CD4-positive, alpha-beta memory T cell (primary cell): ENCODE measurements at regions of chr20 and their contacts with region 1.

Region 1: DNA sequence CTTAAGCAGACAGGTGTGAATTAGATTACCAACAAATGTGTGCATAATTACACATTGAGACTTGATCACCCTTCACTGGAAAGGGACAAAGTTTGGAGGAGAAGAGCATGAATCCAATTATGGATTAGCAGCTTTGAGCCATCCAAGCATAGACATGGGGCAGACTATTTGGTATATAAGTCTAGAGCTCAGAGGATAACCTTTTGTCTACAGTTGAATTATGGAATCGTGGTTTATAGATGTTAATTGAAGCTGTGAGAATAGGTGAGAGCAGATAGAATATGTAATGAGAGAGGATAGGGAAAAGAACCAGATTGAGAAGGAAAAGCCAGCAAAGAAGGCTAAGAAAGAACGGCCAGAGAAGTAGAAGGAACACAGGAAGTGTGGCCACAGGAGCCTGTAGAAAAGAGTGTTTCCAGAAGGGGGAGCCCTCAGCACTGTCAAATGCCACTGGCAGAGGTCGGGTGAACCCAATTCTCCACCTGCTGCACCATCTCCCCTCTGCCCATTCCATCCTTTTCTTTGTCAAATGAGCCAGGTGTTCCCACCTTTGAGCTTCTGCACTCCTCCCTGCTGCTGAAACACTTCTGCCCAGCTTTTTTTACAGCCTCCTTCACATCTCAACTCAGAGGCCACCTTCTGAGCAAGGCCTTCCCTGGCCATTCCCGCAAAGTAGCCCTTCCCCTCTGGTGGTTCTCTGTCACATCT is 7.3 kb downstream of the DNTTIP1 start:
- DNase-seq: peak; percentile 56 to 62 (median 60)
- H3K4me3 ChIP-seq: no peak overlapping the region
- H3K4me3 Mint-ChIP-seq: no peak overlapping the region
- H3K27ac ChIP-seq: no peak overlapping the region
- H3K27ac Mint-ChIP-seq: peak overlapping the region in 6 of 7 donors; percentile 3 to 89 (median 46)
- H3K4me1 ChIP-seq: peaks cover 7% of the 10 kb centered on the region
- H3K4me1 Mint-ChIP-seq: peaks cover 4 to 11% (median 8%) of the 10 kb centered on the region in 4 donors
- H3K27me3 ChIP-seq: no peaks in the 10 kb centered on the region
- H3K27me3 Mint-ChIP-seq: no peaks in the 10 kb centered on the region

Region 2: DNA sequence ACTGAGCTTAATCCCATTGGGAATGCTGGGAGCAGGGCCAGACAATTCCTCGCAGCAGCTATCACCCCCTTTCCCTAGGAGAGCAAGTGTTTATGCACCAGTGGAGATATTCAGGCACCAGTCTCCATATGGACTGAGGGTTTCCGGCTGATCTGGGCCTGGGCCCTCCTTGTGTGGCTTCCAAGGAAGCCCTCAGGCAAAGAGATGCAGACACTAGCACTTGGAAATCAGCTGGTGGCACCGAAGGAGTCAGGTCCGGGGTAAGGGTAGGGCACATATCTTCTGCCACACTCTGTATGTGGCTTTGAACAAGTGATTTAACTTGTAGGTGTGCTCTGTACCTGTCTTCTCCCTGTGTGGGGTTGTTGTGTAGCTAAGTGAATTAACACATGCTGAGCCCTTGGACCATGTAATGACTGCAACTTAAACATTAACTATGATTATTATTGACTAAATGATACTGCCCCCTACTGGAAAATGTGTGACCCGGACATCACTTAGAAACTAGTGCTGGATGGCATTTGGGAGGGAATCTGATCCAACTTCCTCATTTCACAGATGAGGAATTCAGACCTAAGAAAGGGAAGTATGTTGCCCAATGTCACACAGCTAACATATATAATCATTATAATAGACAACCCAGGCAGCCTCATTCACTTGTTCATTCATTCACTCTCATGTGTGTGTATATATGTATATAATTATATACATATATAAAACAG is 348.8 kb before region 1 on chr20:
- CTCF ChIA-PET with region 1: no interaction called
- POLR2A ChIA-PET with region 1: no interaction called
- intact Hi-C with region 1: no loop called
- DNase-seq: peak in 4 of 5 donors; percentile 36 to 47 (median 46)
- H3K4me3 ChIP-seq: no peak overlapping the region
- H3K4me3 Mint-ChIP-seq: no peak overlapping the region
- H3K27ac ChIP-seq: no peak overlapping the region
- H3K27ac Mint-ChIP-seq: no peak overlapping the region
- H3K4me1 ChIP-seq: no peaks in the 10 kb centered on the region
- H3K4me1 Mint-ChIP-seq: peaks cover 6 to 11% (median 8%) of the 10 kb centered on the region in 4 donors
- H3K27me3 ChIP-seq: no peaks in the 10 kb centered on the region
- H3K27me3 Mint-ChIP-seq: peaks cover 4 to 8% of the 10 kb centered on the region in 2 donors

Region 3: GRCh38 chr20:45523821-45524220 is 275.3 kb before region 1 on chr20:
- CTCF ChIA-PET with region 1: no interaction called
- POLR2A ChIA-PET with region 1: no interaction called
- intact Hi-C with region 1: no loop called
- DNase-seq: no peak
- H3K4me3 ChIP-seq: no peak overlapping the region
- H3K4me3 Mint-ChIP-seq: no peak overlapping the region
- H3K27ac ChIP-seq: no peak overlapping the region
- H3K27ac Mint-ChIP-seq: no peak overlapping the region
- H3K4me1 ChIP-seq: no peaks in the 10 kb centered on the region
- H3K4me1 Mint-ChIP-seq: no peaks in the 10 kb centered on the region
- H3K27me3 ChIP-seq: peaks cover 4% of the 10 kb centered on the region
- H3K27me3 Mint-ChIP-seq: peaks cover 32 to 36% of the 10 kb centered on the region in 2 donors

Region 4: GRCh38 chr20:45823949-45824835 is 25.1 kb after region 1 on chr20:
- CTCF ChIA-PET with region 1: interaction called, 11 read pairs
- POLR2A ChIA-PET with region 1: no interaction called
- intact Hi-C with region 1: no loop called
- DNase-seq: peak; percentile 37 to 58 (median 47)
- H3K4me3 ChIP-seq: peak overlapping the region in 1 of 2 donors; percentile 46
- H3K4me3 Mint-ChIP-seq: peak overlapping the region; percentile 64 to 84 (median 80)
- H3K27ac ChIP-seq: no peak overlapping the region
- H3K27ac Mint-ChIP-seq: peak overlapping the region in 6 of 7 donors; percentile 2 to 86 (median 66)
- H3K4me1 ChIP-seq: peaks cover 7% of the 10 kb centered on the region
- H3K4me1 Mint-ChIP-seq: peaks cover 7 to 22% (median 15%) of the 10 kb centered on the region in 4 donors
- H3K27me3 ChIP-seq: no peaks in the 10 kb centered on the region
- H3K27me3 Mint-ChIP-seq: peaks cover 6 to 19% of the 10 kb centered on the region in 2 donors

Region 5: DNA sequence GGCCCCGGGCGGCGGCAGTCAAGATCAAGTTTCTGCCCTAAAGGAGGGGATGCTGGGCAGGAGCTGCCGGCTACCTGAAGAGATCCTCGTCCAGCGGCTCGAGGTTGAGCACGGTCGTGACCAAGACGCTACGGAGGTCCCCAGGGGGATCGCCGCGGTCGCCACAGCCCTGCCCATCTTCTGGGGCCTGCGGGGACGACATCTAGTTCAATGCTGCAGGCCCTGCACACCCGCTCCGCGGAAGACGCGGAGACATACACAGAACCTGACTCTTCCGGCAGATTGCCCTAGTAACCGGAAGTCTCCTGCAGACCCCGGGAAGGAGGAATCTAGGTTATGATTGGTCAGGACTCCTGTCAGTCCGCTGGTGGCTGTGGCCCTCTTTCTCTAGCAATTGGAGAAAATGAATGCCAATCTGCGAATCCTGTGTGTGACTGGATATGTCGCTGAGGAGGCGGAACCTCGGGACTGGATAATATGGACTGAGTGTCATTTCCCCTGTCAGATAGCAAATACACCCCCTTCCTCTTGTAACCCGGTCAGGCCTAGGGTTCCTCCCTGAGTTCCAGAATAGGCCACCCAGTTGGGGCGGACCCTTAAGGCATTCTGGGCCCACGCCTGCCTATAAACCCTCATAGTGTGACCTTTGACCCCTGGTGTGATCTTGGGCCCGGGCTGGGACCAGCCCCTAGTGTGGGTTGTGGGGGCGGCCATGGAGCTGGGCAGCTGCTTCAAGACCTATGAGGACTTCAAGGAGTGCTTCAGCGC is 58.2 kb after region 1 on chr20 and contains the starts of genes ACOT8 and ZSWIM3:
- CTCF ChIA-PET with region 1: interaction called, 6 read pairs
- POLR2A ChIA-PET with region 1: no interaction called
- intact Hi-C with region 1: loop called (anchors 10 kb)
- DNase-seq: peak; percentile 97 to 99 (median 99)
- H3K4me3 ChIP-seq: peak within 1 kb of the TSS; percentile 73 to 78
- H3K4me3 Mint-ChIP-seq: peak within 1 kb of the TSS; percentile 86 to 98 (median 95)
- H3K27ac ChIP-seq: peak within 1 kb of the TSS; percentile 76
- H3K27ac Mint-ChIP-seq: peak within 1 kb of the TSS; percentile 84 to 99 (median 98)
- H3K4me1 ChIP-seq: peaks cover 35% of the 10 kb centered on the region
- H3K4me1 Mint-ChIP-seq: peaks cover 25 to 66% (median 39%) of the 10 kb centered on the region in 4 donors
- H3K27me3 ChIP-seq: no peaks in the 10 kb centered on the region
- H3K27me3 Mint-ChIP-seq: no peaks in the 10 kb centered on the region
- total RNA-seq, gene ACOT8: 30.6 to 33.4 TPM
- total RNA-seq, gene ZSWIM3: 6.7 to 7.1 TPM

Region 6: DNA sequence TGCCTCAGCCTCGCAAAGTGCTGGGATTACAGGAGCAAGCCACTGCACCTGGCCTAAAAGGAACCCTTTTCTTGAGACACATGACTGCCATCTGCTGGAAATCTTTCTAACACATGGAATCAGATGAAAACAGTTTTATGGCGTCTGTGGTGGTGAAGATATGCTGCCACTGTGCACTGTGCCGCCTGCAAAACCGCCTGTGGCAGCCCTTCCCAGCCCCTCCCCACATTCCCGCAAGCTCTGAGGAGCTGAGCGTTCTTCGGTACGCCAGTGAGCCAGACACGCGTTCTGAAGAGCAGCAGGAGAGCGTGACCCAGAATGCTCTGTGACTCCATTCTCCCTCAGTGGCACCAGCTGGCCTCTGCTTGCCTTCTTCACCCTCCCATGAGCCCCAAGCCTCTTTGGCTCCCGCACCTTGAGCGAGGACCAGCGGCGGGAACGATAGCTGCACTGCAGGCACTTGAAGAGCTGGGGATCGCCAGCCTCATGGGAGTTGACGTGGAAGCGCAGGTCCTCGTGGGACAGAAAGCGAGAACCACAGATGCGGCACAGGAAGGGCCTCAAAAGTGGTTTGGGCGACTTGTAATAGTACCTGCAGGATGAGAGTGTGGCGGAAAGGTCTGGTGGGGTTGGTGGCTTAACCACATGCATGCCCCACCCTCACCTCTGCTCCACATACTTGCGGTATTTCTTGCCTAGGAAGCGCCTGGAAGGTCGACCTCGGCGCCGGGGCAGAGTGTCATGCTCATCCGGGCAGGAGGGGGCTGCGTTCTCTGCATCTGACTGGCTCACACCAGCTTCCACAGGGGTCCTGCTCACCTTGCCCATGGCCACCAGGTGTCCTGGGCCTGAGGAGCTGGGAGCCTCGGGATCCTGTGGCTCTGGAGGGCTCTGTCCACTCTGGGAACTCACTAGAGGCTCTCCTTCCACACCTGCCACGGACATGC is 164.2 kb after region 1 on chr20:
- CTCF ChIA-PET with region 1: interaction called, 54 read pairs
- POLR2A ChIA-PET with region 1: no interaction called
- intact Hi-C with region 1: loop called (anchors 1 kb)
- DNase-seq: peak in 4 of 5 donors; percentile 33 to 51 (median 36)
- H3K4me3 ChIP-seq: no peak overlapping the region
- H3K4me3 Mint-ChIP-seq: peak overlapping the region in 4 of 8 donors; percentile 56 to 64 (median 60)
- H3K27ac ChIP-seq: no peak overlapping the region
- H3K27ac Mint-ChIP-seq: peak overlapping the region; percentile 53 to 87 (median 61)
- H3K4me1 ChIP-seq: no peaks in the 10 kb centered on the region
- H3K4me1 Mint-ChIP-seq: peaks cover 0 to 11% (median 4%) of the 10 kb centered on the region in 4 donors
- H3K27me3 ChIP-seq: no peaks in the 10 kb centered on the region
- H3K27me3 Mint-ChIP-seq: no peaks in the 10 kb centered on the region

Region 7: GRCh38 chr20:45987108-45987780 is 188.2 kb after region 1 on chr20:
- CTCF ChIA-PET with region 1: interaction called, 11 read pairs
- POLR2A ChIA-PET with region 1: no interaction called
- intact Hi-C with region 1: no loop called
- DNase-seq: peak; percentile 67 to 76 (median 70)
- H3K4me3 ChIP-seq: no peak overlapping the region
- H3K4me3 Mint-ChIP-seq: no peak overlapping the region
- H3K27ac ChIP-seq: no peak overlapping the region
- H3K27ac Mint-ChIP-seq: no peak overlapping the region
- H3K4me1 ChIP-seq: no peaks in the 10 kb centered on the region
- H3K4me1 Mint-ChIP-seq: peaks cover 0 to 4% (median 3%) of the 10 kb centered on the region in 4 donors
- H3K27me3 ChIP-seq: no peaks in the 10 kb centered on the region
- H3K27me3 Mint-ChIP-seq: no peaks in the 10 kb centered on the region

Region 8: DNA sequence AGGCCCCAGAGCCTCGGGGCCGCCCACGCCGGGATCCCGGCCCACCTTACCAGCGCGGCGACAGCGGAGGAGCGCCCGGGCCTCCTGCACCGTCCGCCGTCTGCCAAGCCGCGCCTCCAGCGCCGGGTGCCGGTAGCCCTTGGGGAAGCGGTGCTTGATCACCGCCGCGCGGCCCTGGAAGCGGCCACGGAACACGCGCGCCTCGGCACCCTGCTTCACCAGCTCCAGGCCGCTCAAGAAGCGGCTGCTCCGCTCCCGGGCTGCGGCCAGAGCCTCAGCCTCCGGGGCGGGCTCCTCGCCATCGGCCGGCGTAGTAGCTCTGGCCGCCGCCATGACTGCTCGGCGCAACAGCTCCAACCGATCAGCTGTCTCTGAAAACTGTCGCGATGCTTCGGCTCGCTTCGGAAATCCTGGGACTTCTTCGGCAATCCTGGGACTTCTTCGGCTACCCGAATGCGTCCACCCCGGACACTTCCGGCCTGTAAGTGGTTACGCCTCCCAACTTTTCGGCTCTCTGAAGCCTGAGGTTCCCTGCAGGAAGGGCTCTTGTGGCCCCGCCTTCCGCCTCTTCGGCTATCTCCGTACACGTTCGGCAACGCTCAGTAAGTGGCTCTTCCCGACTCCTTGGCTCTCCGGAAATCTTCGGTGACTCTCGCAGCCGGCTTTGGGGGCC is 890.1 kb after region 1 on chr20 and contains the start of gene TP53RK:
- CTCF ChIA-PET with region 1: no interaction called
- POLR2A ChIA-PET with region 1: no interaction called
- intact Hi-C with region 1: loop called (anchors 10 kb)
- DNase-seq: peak; percentile 95 to 98 (median 96)
- H3K4me3 ChIP-seq: peak within 1 kb of the TSS; percentile 59 to 92
- H3K4me3 Mint-ChIP-seq: peak within 1 kb of the TSS; percentile 95 to 100 (median 98)
- H3K27ac ChIP-seq: peak within 1 kb of the TSS; percentile 85
- H3K27ac Mint-ChIP-seq: peak within 1 kb of the TSS; percentile 84 to 100 (median 97)
- H3K4me1 ChIP-seq: peaks cover 46% of the 10 kb centered on the region
- H3K4me1 Mint-ChIP-seq: peaks cover 27 to 48% (median 41%) of the 10 kb centered on the region in 4 donors
- H3K27me3 ChIP-seq: no peaks in the 10 kb centered on the region
- H3K27me3 Mint-ChIP-seq: no peaks in the 10 kb centered on the region
- total RNA-seq, gene TP53RK: 25.7 to 29.4 TPM